GM12878 (cell line): ENCODE measurements at regions of chr14 and their contacts with region 1.

Region 1: DNA sequence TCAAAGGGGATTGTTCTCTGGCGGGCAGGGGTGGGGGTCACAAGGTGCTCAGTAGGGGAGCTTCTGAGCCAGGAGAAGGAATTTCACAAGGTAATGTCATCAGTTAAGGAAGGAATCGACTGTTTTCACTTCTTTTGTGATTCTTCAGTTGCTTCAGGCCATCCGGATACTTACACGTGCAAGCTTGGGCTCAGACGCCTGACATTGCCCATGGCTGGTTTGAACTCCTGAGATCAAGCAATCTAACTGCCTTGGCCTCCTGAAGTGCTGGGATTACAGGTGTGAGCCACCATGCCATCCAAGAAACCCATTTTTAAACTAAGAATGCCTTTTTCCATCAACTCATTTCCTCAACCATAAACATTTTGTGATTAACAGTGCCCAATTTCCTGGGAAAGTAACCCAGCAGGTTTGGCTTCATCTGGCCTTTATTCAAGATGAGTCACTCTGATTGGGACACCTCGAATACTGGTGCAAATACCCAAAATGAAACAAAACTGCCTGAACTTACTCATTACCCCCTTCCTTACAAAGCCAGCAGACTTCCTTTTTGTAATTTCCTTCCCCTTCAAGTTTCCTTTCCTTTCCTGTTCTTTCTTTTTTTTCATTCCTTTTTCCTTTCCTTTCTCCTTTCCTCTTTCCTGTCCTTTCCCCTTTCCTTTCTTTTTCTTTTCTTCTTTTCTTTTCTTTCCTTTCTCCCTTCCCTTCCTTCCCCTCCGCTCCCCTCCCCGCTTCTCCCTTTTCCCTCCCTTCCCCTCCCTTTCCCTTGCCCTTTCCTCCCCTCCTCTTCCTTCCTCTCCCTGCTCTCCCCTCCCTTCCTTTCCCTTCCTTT is 10.2 kb upstream of the RNASE10 start:
- DNase-seq: no peak
- ATAC-seq: no peak
- H3K4me3 ChIP-seq: no peak overlapping the region
- H3K27ac ChIP-seq: no peak overlapping the region
- H3K4me1 ChIP-seq: peaks cover 36% of the 10 kb centered on the region
- H3K27me3 ChIP-seq: no peaks in the 10 kb centered on the region
- CTCF ChIP-seq: no peak
- EP300 ChIP-seq: no peak
- POLR2A ChIP-seq: no peak
- RAD21 ChIP-seq: no peak

Region 2: DNA sequence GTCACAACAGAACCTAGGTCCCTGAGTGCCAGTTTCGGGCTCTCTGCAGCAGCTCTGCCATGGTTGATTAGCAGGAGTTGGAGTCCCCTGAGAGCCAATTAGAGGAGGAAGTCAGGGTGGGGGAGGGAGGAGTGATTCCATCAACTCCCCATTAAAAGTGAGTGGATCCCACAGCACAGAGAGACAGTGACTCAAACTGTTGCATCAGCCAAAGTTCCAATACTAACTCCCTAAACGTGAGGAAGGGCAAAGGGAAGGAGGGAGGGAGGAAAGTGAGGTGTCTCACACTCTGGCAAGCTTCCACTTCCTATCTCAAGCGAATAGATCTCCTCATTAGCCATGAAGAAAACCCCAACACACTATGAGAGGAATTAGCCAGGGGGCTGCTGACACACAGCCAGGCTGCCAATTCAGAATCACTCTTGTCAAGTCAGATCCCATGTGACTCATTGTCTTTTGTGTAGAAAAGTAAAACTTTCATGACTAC is 232.5 kb before region 1 on chr14:
- CTCF ChIA-PET with region 1: no interaction called
- POLR2A ChIA-PET with region 1: no interaction called
- RAD21 ChIA-PET with region 1: no interaction called
- SMC1A ChIA-PET with region 1: no interaction called
- in situ Hi-C with region 1: no loop called
- intact Hi-C with region 1: no loop called
- DNase-seq: peak; percentile 43
- ATAC-seq: peak; percentile 97
- H3K4me3 ChIP-seq: no peak overlapping the region
- H3K27ac ChIP-seq: no peak overlapping the region
- H3K4me1 ChIP-seq: no peaks in the 10 kb centered on the region
- H3K27me3 ChIP-seq: no peaks in the 10 kb centered on the region
- CTCF ChIP-seq: no peak
- EP300 ChIP-seq: no peak
- POLR2A ChIP-seq: no peak
- RAD21 ChIP-seq: no peak

Region 3: DNA sequence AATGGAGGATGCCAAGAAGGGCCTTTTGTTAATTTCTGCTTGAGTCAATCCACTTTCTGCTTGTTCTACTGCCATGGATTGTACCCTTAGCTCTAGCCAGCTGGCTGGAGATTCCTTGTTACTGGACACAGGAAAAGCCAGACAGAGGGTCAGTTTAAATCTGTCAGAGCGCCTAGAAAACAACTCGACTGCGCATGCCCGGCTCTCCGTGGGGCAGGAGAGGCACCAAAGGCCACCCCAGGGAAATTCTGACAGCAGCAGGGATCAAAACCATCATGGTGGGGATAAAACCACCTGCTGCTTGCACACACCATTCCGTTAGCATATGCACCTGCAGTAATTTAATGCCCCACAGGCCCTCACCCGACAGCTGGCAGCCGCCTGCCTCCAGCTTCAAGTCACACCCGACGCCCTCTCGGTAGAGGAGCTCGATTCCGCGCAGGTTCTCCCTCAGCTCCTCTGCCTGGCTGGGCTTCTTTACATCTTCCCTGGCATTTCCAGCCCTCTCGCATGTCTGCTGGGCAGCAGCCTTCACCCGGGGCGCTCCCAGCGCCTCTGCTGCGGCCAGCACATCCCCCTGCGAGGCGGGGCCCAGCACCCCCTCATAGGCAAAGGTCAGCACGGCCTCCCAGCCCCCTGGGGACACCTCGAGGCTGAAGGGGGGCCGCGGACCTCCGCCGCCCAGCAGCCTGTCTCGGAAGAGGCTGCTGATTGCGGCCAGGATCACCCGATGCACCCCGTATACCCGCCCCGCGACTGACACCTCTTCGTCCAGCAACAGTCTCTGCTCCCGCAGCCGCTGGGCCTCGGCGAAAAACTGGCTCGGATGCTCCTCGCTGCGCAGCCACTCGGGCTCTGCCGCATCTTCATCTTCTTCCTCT is 60.2 kb before region 1 on chr14:
- CTCF ChIA-PET with region 1: no interaction called
- POLR2A ChIA-PET with region 1: no interaction called
- RAD21 ChIA-PET with region 1: no interaction called
- SMC1A ChIA-PET with region 1: no interaction called
- in situ Hi-C with region 1: no loop called
- intact Hi-C with region 1: no loop called
- DNase-seq: no peak
- ATAC-seq: no peak
- H3K4me3 ChIP-seq: no peak overlapping the region
- H3K27ac ChIP-seq: no peak overlapping the region
- H3K4me1 ChIP-seq: no peaks in the 10 kb centered on the region
- H3K27me3 ChIP-seq: no peaks in the 10 kb centered on the region
- CTCF ChIP-seq: no peak
- EP300 ChIP-seq: no peak
- POLR2A ChIP-seq: no peak
- RAD21 ChIP-seq: no peak

Region 4: GRCh38 chr14:20454516-20455354 is 40.4 kb before region 1 on chr14 and contains the starts of genes APEX1 and OSGEP:
- CTCF ChIA-PET with region 1: no interaction called
- POLR2A ChIA-PET with region 1: interaction called, 7 read pairs
- RAD21 ChIA-PET with region 1: interaction called, 4 read pairs
- SMC1A ChIA-PET with region 1: interaction called, 17 read pairs
- in situ Hi-C with region 1: no loop called
- intact Hi-C with region 1: no loop called
- DNase-seq: peak; percentile 99
- ATAC-seq: peak; percentile 93
- H3K4me3 ChIP-seq: peak within 1 kb of the TSS; percentile 83
- H3K27ac ChIP-seq: peak within 1 kb of the TSS; percentile 98
- H3K4me1 ChIP-seq: peaks cover under 1% of the 10 kb centered on the region
- H3K27me3 ChIP-seq: no peaks in the 10 kb centered on the region
- CTCF ChIP-seq: no peak
- EP300 ChIP-seq: peak in 1 of 2 experiments; percentile 63; a peak in 2 of 4 replicates
- POLR2A ChIP-seq: peak; percentile 93
- RAD21 ChIP-seq: no peak
- polyA plus RNA-seq, gene APEX1: 299 to 320 TPM
- polyA plus RNA-seq, gene OSGEP: 48.9 to 49.4 TPM

Region 5: GRCh38 chr14:20461274-20462001 is 33.7 kb before region 1 on chr14 and contains the start of gene PIP4P1:
- CTCF ChIA-PET with region 1: interaction called, 7 read pairs
- POLR2A ChIA-PET with region 1: interaction called, 3 read pairs
- RAD21 ChIA-PET with region 1: interaction called, 21 read pairs
- SMC1A ChIA-PET with region 1: interaction called, 49 read pairs
- in situ Hi-C with region 1: no loop called
- intact Hi-C with region 1: no loop called
- DNase-seq: peak; percentile 100
- ATAC-seq: peak; percentile 96
- H3K4me3 ChIP-seq: peak within 1 kb of the TSS; percentile 73
- H3K27ac ChIP-seq: peak within 1 kb of the TSS; percentile 87
- H3K4me1 ChIP-seq: peaks cover 6% of the 10 kb centered on the region
- H3K27me3 ChIP-seq: no peaks in the 10 kb centered on the region
- CTCF ChIP-seq: no peak
- EP300 ChIP-seq: no peak
- POLR2A ChIP-seq: peak; percentile 78
- RAD21 ChIP-seq: no peak
- polyA plus RNA-seq, gene PIP4P1: 19.1 to 41.6 TPM

Region 6: DNA sequence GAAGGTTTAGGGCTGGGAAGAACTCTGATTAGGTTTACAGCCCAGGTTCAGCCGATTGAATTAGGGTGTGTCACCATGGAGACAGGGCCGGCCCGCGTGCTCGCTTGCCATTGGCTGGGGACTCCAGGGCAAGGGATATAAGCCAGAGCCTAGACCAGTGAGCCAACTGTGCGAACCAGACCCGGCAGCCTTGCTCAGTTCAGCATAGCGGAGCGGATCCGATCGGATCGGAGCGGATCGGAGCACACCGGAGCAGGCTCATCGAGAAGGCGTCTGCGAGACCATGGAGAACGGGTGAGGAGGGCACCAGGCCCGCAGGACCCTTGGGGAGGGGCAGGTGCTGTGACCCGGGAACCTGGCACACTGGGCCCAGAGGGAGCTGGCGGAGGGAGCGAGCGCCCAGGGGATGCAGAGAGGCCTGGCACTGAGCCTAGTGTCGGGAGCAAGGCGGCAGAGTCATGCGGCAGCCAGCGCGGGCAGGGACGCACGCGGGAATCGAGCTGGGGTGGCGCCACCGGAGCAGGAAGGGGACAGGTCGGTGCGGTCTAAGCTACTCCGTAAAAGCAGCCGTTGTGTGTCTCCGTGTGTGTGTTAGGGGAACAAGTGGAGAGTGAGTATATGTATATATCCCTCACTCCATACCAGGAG is 25.8 kb before region 1 on chr14 and contains the start of gene PNP:
- CTCF ChIA-PET with region 1: interaction called, 4 read pairs
- POLR2A ChIA-PET with region 1: interaction called, 28 read pairs
- RAD21 ChIA-PET with region 1: interaction called, 21 read pairs
- SMC1A ChIA-PET with region 1: interaction called, 49 read pairs
- in situ Hi-C with region 1: no loop called
- intact Hi-C with region 1: no loop called
- DNase-seq: peak; percentile 65
- ATAC-seq: peak; percentile 97
- H3K4me3 ChIP-seq: peak within 1 kb of the TSS; percentile 85
- H3K27ac ChIP-seq: peak within 1 kb of the TSS; percentile 69
- H3K4me1 ChIP-seq: peaks cover 7% of the 10 kb centered on the region; the same call in 1 of the 2 replicates
- H3K27me3 ChIP-seq: no peaks in the 10 kb centered on the region
- CTCF ChIP-seq: 0 out of 6 replicates have a peak, but pooled peaks of 1 of the 3 experiments have one; percentile 7
- EP300 ChIP-seq: no peak
- POLR2A ChIP-seq: peak; percentile 100
- RAD21 ChIP-seq: no peak
- polyA plus RNA-seq, gene PNP: 103 to 123 TPM

Region 7: DNA sequence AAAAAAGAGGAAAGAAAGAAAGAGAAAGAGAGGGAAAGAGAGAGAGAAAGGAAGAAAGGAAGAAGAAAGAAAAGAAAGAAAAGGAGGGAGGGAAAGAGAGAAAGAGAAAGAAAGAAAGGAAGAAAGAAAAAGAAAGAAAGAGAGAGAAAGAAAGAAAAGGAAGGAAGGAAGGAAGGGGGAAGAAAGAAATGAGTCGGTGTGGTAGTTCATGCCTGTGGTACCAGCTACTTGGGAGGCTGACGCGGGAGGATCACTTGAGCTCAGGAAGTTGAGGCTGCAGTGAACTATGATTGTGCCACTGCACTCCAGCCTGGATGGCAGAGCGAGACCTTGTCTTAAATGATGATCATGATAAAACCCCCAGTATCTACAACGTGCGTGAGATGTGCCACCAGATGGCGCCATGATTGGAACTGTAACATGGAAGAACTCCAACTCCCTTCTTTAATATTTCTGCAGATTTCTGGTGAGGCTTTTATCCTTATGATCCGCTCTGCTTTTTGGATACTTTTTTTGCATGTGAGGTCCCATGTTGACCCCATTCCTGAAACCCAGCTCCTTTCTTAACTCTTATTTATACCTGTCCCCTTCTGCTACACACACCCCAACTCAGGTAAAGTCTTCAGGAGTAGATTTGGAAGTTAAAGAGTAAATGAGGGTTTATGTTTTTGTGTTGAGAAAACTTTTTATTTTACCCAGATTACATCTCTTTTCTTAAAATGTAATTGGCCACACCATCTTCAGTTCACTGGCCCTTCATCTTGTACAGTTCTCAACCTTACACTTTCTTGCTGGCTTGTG is 35.8 kb after region 1 on chr14:
- CTCF ChIA-PET with region 1: interaction called, 13 read pairs
- POLR2A ChIA-PET with region 1: no interaction called
- RAD21 ChIA-PET with region 1: interaction called, 4 read pairs
- SMC1A ChIA-PET with region 1: interaction called, 3 read pairs
- in situ Hi-C with region 1: no loop called
- intact Hi-C with region 1: loop called (anchors 5 kb)
- DNase-seq: peak; percentile 21
- ATAC-seq: peak; percentile 98
- H3K4me3 ChIP-seq: no peak overlapping the region
- H3K27ac ChIP-seq: no peak overlapping the region
- H3K4me1 ChIP-seq: no peaks in the 10 kb centered on the region
- H3K27me3 ChIP-seq: no peaks in the 10 kb centered on the region
- CTCF ChIP-seq: peak; percentile 65 to 75 (median 73)
- EP300 ChIP-seq: no peak
- POLR2A ChIP-seq: no peak
- RAD21 ChIP-seq: peak; percentile 66

Region 8: DNA sequence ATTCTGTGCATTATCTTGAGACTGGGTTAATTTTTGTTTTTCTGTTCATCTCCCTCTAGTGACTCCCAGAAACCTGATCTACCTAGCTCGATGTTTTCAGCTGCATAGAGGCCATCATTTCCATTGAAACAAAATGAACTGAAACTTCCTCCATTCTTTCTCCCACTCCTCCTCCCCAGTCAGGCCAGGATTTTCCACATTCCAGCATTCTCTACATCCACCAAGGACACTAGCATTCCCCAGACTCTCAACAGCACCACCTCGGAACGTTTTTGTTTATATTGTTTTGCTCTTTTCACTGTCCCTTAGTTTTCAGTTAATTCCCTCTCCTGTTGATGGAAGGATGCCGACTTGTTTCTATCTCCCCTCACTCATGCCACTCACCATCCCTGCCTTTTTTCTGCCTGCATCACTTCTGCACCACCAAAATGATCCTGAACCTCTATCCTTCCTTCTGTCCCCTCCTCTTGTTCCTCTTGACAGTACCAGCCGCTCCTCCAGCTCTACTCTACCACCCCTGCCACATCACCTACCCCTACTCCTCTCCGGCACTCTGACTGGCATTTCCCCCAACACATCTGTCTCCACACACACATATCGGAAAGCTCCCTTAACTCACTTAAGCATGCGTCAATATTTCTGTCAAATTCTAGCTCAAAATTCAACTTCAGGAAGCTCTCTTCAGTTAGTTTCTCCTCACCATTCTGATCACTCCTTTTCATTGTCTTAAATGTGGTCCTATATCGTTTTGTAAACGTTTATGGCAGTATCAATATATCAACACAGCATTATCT is 133.1 kb after region 1 on chr14:
- CTCF ChIA-PET with region 1: no interaction called
- POLR2A ChIA-PET with region 1: no interaction called
- RAD21 ChIA-PET with region 1: no interaction called
- SMC1A ChIA-PET with region 1: no interaction called
- in situ Hi-C with region 1: no loop called
- intact Hi-C with region 1: no loop called
- DNase-seq: no peak
- ATAC-seq: no peak
- H3K4me3 ChIP-seq: no peak overlapping the region
- H3K27ac ChIP-seq: no peak overlapping the region
- H3K4me1 ChIP-seq: peaks cover 23% of the 10 kb centered on the region
- H3K27me3 ChIP-seq: peaks cover 0 to 2% of the 10 kb centered on the region in 2 experiments; a peak in 2 of 4 replicates
- CTCF ChIP-seq: no peak
- EP300 ChIP-seq: no peak
- POLR2A ChIP-seq: no peak
- RAD21 ChIP-seq: no peak